A549 (cell line): ENCODE measurements at regions of chr18 and their contacts with region 1.

Region 1: DNA sequence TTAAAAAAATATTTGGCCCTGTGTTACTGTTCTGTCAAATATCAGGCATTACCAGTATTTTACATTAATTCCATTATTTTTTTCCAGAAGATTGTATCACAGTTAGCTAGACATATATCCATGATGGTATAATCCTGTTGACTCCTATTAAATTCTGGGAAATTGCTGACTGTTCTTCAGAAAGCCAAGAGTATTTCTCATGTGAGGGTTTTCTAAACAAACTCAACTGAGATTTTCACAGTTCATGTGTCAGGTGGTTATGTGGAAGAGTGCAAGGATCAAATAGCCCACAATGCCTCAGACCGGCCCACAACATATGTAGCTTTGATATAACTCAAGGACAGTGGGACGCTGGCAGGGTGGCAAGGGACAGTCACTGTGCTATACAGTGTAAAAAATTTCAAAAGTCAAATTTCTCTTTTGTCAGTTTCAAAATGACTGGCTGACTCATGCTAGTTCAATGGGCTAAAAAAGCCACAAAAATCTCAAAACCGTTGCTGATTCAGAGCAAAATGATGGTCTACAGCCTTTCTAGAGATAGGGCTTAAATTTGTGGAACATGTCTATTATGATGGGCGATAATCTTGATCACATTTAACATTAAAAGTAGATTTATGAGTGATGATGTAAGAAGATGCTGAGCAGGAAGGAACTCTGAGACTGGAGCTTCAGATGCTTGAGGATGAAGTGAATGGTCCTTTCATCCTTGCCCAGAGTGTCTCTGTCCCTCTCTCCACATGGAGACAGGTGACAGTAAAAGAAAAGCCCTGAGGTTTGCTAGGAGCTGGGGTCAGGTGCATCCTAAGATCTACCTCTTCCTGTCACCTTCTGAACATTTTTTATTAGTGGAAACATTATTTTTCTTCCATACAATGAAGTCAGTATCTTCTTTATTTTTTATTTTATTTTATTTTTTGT is 175.8 kb upstream of the PIEZO2 start:
- DNase-seq: no peak
- ATAC-seq: peak in 1 of 2 experiments; percentile 43; a peak in 2 of 6 replicates
- H3K4me3 ChIP-seq: no peak overlapping the region
- H3K27ac ChIP-seq: peak overlapping the region in 1 of 2 experiments; percentile 72; a peak in 3 of 6 replicates
- H3K4me1 ChIP-seq: peaks cover 31% of the 10 kb centered on the region
- CTCF ChIP-seq: no peak
- EP300 ChIP-seq: no peak
- POLR2A ChIP-seq: no peak
- RAD21 ChIP-seq: no peak

Region 2: DNA sequence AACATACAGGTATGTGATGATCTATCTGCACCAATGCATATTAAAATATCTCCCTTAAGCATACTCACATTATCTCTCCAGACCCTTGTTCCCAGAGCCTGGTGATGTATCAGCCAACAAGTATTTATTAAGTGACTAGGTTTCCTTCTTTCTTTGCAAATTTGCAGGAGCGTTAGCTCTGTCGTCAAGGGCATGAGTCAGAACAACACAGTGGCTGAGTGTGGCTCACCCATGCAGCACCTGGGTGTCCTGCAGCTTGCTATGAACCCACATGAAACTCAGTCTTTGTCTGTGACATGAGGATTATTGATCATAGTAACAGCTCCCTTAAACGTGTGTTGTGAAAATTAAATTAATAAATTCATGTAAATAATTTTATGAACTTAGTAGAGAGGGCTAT is 272.4 kb before region 1 on chr18:
- CTCF ChIA-PET with region 1: no interaction called
- POLR2A ChIA-PET with region 1: no interaction called
- DNase-seq: no peak
- ATAC-seq: no peak
- H3K4me3 ChIP-seq: no peak overlapping the region
- H3K27ac ChIP-seq: no peak overlapping the region
- H3K4me1 ChIP-seq: 0 out of 3 replicates have a peak, but pooled peaks cover 3% of the 10 kb centered on the region
- CTCF ChIP-seq: no peak
- EP300 ChIP-seq: no peak
- POLR2A ChIP-seq: no peak
- RAD21 ChIP-seq: no peak

Region 3: DNA sequence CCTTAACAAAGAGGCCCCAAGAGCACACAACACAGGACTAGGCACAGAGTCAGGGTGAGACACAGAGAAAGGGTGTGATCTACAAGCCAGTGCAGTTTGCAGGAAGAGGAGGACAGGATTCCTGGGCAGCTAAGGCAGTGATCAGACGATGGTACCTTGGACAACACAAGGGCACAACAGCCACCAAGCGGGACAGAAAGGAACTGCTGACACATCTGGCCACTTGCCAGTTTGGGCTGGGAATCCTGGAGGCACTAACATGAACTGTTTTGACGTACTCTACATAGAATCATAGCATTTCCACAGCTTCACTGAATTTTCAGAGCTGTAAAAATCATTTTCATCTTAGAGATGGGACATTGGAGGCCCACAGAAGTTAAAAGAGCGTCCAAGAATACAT is 62.7 kb after region 1 on chr18:
- CTCF ChIA-PET with region 1: no interaction called
- POLR2A ChIA-PET with region 1: no interaction called
- DNase-seq: peak; percentile 35 to 73
- ATAC-seq: peak; percentile 74 to 81
- H3K4me3 ChIP-seq: no peak overlapping the region
- H3K27ac ChIP-seq: no peak overlapping the region
- H3K4me1 ChIP-seq: no peaks in the 10 kb centered on the region
- CTCF ChIP-seq: no peak
- EP300 ChIP-seq: no peak
- POLR2A ChIP-seq: no peak
- RAD21 ChIP-seq: peak; percentile 31 to 39; a peak in 3 of 5 replicates

Region 4: DNA sequence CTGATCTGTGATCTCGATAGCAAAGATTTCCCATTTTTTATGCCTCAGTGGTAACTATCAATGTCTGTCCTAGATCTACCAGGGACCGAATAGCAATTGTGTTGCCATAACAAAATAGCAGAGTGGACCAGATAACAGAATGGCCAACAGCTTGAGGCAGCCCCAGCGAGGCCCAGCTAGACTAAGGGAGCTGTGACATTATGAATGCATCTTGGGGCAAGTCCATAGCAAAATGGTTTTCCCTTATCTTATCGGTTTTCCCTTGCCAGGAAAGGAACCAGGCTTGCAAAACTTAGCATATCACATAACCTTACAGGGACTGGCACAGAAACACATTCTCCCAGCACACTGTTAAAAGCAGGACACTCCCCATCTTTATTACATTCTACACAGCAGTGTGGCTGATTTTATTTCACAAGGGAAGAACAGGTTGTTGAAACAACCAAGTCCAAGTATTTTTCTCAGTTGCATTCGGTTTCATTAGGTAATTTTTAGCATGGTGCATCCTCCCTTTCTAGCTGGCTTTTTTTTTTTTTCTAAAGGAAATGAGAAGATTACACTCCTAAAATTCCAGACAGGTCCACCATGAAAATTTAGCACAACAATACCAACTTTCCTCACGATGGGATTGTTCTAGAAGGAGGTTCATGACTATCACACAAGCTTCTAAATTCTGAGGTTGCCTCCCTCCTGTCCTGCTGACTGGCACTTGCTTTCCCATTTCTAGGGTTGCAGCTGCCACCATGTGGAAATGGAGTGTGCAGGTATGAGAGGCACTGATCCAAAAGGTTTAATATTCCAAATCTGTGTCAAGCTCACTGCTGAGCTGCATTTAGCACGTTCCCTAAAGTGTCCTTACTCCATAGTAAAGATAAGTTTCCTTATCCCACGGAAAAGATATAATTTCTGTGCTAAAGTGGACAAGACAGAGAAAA is 187.1 kb after region 1 on chr18:
- CTCF ChIA-PET with region 1: interaction called, 14 read pairs
- POLR2A ChIA-PET with region 1: no interaction called
- DNase-seq: peak; percentile 11 to 49
- ATAC-seq: peak; percentile 69 to 80; a peak in 4 of 6 replicates
- H3K4me3 ChIP-seq: no peak overlapping the region
- H3K27ac ChIP-seq: no peak overlapping the region
- H3K4me1 ChIP-seq: peaks cover 5% of the 10 kb centered on the region; the same call in 1 of the 3 replicates
- CTCF ChIP-seq: peak; percentile 60
- EP300 ChIP-seq: no peak
- POLR2A ChIP-seq: no peak
- RAD21 ChIP-seq: peak; percentile 78 to 81